ENCODE measurements at regions of chr20 and their contacts with region 1.

Region 1: DNA sequence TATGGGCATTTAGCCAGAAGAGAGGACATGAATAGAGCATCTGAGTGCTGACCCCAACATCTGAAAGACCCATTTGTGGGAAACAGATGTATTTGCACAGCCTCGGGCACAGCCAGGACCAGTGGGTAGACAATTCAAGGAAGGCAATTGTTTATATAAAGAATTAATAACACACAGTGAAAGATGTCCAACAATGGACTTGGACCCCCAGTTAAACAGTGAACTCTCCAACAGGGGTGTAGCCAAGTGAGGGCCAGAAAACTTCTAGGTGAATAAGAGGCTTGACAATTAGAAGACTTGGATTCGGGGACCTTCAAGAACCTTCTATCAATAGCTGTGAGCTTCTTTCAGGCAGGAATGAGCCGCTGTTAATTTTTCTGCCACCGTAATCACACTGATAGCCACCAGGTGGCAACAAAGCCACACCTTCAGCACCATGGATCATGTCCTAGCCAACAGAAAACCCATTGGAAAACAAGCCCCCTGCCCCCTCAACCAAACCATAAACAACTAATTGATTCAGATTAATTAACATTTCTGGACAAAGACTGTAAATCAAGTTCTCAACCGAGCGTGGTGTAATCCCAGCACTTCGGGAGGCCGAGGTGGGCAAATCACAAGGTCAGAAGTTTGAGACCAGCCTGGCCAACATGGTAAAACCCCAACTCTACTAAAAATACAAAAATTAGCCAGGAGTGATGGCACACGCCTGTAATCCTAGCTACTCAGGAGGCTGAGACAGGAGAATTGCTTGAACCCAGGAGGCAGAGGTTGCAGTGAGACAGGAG is 8.8 kb upstream of the SRSF6 start:
- DNase-seq: peak; percentile 68
- ATAC-seq: peak; percentile 53
- H3K4me3 ChIP-seq: no peak overlapping the region
- H3K4me3 Mint-ChIP-seq: no peak overlapping the region
- H3K27ac ChIP-seq: no peak overlapping the region
- H3K27ac Mint-ChIP-seq: no peak overlapping the region
- H3K4me1 ChIP-seq: peaks cover 0 to 3% of the 10 kb centered on the region in 2 donors
- H3K4me1 Mint-ChIP-seq: peaks cover 2% of the 10 kb centered on the region
- H3K27me3 ChIP-seq: peaks cover 0 to 18% (median 4%) of the 10 kb centered on the region in 4 experiments
- H3K27me3 Mint-ChIP-seq: peaks cover 40% of the 10 kb centered on the region
- CTCF ChIP-seq: peak; percentile 82

Region 2: DNA sequence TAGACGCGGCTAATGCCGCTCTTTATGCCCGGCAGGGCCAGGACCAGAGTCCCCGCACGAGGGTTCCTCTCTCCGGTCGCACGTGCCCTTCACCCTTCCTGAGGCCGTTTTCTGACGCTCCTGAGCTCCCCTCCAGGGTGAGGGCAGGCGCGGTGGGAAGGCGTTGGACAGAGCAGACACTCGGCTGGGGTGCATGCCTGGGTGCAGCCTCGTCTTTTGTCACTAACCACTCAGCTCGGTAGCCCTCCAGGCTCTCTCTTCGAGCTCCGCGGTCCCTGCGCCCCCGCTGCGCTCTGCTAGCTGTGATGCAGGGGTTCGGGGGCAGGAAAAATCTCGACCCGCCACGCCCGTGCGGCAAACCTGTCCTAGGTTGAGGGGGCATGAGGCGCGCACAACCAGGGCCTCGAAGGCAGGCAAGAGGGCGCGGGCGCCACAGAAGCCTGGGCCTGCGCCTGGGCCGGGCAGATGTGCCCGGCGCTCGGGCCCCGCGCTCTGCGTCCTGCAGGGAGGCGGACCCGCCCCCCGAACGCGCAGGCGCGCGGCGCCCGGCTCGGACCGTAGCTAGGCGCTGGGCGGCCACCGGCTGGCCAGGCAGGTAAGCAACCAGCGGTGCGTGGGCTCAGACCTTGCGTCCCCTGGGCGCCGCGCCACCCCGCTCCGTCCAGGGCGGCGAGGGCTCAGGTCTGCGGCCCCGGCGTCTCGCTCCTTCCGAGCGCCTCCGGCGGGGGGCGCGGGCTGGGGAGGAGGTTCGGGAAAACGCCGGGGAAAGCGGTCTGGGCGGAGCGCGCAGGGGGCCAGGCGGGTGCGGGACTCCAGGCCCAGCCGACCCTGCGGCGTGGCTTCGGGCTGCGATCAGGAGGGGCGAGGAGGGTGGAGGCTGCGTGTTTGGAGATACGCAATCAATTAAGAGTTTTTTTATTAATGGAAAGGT is 58.5 kb after region 1 on chr20 and contains the start of gene L3MBTL1:
- CTCF ChIA-PET with region 1: no interaction called
- POLR2A ChIA-PET with region 1: no interaction called
- intact Hi-C with region 1: loop called (anchors 2 kb)
- DNase-seq: peak; percentile 29
- ATAC-seq: peak; percentile 55
- H3K4me3 ChIP-seq: peak within 1 kb of the TSS; percentile 28 to 63 (median 44)
- H3K4me3 Mint-ChIP-seq: peak within 1 kb of the TSS; percentile 83
- H3K27ac ChIP-seq: no peak within 1 kb of the TSS
- H3K27ac Mint-ChIP-seq: no peak within 1 kb of the TSS
- H3K4me1 ChIP-seq: peaks cover 9 to 15% of the 10 kb centered on the region in 2 donors
- H3K4me1 Mint-ChIP-seq: peaks cover 7% of the 10 kb centered on the region
- H3K27me3 ChIP-seq: peaks cover 0 to 42% (median 16%) of the 10 kb centered on the region in 4 experiments
- H3K27me3 Mint-ChIP-seq: peaks cover 44% of the 10 kb centered on the region
- CTCF ChIP-seq: no peak
- total RNA-seq, gene L3MBTL1: 31.4 and 35.7 TPM in 2 replicates

Region 3: DNA sequence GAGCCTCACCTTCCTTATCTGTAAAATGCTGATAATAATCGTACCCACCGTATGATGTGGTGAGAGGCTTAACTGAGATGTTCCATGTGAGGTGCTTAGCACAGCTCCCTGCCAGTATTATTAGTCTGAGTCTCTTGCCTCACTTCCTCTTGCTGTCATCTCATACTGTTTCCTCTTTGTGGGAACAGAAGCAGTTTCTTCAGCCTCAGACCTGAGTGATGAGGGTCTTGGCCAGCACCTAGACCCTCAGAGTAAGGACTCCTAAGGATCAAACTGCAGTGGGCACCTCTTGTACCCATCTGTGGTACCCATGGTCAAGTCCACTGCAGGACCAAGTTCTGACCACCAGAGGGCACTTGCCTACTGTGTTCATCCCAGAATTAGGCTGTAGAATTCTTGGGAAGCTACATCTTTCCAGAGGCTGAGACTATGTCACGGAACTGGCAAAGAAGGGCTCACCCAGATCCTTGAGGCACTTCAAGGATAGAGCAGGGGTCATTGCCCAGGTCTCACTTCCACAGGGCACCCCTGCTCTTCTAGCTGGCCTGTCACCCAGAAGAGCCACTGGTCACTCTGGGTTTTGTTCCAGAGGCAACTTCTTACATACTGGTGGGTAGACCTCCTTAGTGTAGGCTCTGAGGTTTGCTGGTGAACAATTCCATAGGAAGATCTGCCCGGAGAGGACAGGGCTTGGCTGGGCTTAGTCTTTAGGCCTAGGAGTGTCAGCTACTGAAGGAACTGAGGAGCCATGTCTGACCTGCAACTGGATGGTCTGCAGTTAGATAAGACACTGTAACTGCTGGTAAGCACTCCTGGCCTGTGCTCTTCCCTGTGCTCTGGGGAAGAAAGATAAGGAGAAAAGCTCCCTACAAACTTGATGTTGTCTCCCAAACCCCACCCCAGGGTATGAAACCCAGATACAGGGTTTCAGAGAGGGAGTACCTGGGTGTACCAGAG is 89.3 kb after region 1 on chr20:
- CTCF ChIA-PET with region 1: interaction called, 13 read pairs
- POLR2A ChIA-PET with region 1: no interaction called
- intact Hi-C with region 1: no loop called
- DNase-seq: peak; percentile 70
- ATAC-seq: peak; percentile 41
- H3K4me3 ChIP-seq: no peak overlapping the region
- H3K4me3 Mint-ChIP-seq: no peak overlapping the region
- H3K27ac ChIP-seq: no peak overlapping the region
- H3K27ac Mint-ChIP-seq: no peak overlapping the region
- H3K4me1 ChIP-seq: peaks cover 0 to 4% of the 10 kb centered on the region in 2 donors
- H3K4me1 Mint-ChIP-seq: peaks cover 2% of the 10 kb centered on the region
- H3K27me3 ChIP-seq: no peaks in the 10 kb centered on the region
- H3K27me3 Mint-ChIP-seq: no peaks in the 10 kb centered on the region
- CTCF ChIP-seq: peak; percentile 92

Region 4: DNA sequence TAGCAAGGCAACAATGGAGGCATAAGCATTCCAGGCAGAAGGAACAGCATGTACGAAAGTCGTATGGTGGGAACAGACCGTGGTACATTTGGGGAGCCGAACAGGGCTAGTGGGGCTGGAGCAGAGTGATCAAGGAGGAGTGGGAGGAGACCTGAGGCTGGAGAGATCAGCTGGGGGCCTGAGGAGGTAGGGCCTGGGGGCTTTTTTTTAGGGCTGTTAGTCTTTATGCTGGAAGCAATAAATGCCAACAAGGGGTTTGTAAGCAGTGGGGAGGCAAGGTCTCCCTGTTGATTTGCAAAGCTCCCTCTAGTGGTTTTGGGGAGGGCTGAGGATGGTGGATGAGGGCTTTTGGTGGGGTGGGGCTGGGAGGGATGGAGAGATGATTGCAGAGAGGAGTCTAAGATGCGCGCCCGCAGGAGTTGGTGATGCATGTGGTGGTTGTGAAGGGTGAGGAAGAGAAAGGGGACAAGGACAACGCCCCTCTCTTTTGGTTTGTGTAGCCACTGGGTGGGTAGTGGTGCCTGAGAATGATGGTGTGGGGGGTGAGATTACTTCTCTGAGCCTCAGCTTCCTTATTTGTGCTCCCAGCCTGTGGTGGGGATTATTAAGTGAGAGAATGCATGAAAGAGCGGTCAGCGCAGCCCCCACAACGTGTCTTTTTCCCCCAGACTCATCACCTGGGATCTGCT is 391.6 kb after region 1 on chr20:
- CTCF ChIA-PET with region 1: no interaction called
- POLR2A ChIA-PET with region 1: no interaction called
- intact Hi-C with region 1: loop called (anchors 5 kb)
- DNase-seq: peak; percentile 34
- ATAC-seq: peak; percentile 56
- H3K4me3 ChIP-seq: no peak overlapping the region
- H3K4me3 Mint-ChIP-seq: no peak overlapping the region
- H3K27ac ChIP-seq: no peak overlapping the region
- H3K27ac Mint-ChIP-seq: no peak overlapping the region
- H3K4me1 ChIP-seq: no peaks in the 10 kb centered on the region
- H3K4me1 Mint-ChIP-seq: peaks cover 8% of the 10 kb centered on the region
- H3K27me3 ChIP-seq: no peaks in the 10 kb centered on the region
- H3K27me3 Mint-ChIP-seq: no peaks in the 10 kb centered on the region
- CTCF ChIP-seq: peak; percentile 25

Region 5: GRCh38 chr20:44187051-44187762 is 738.3 kb after region 1 on chr20 and contains the start of gene JPH2:
- CTCF ChIA-PET with region 1: interaction called, 9 read pairs
- POLR2A ChIA-PET with region 1: no interaction called
- intact Hi-C with region 1: loop called (anchors 2 kb)
- DNase-seq: peak; percentile 27
- ATAC-seq: no peak
- H3K4me3 ChIP-seq: peak within 1 kb of the TSS in 4 of 5 experiments; percentile 0 to 42 (median 18)
- H3K4me3 Mint-ChIP-seq: peak within 1 kb of the TSS; percentile 80
- H3K27ac ChIP-seq: no peak within 1 kb of the TSS
- H3K27ac Mint-ChIP-seq: peak within 1 kb of the TSS; percentile 8
- H3K4me1 ChIP-seq: peaks cover 20 to 21% of the 10 kb centered on the region in 2 donors
- H3K4me1 Mint-ChIP-seq: peaks cover 32% of the 10 kb centered on the region
- H3K27me3 ChIP-seq: peaks cover 0 to 45% (median 15%) of the 10 kb centered on the region in 4 experiments
- H3K27me3 Mint-ChIP-seq: peaks cover 60% of the 10 kb centered on the region
- CTCF ChIP-seq: no peak
- total RNA-seq, gene JPH2: 0.10 and 0.17 TPM in 2 replicates